ENCODE measurements at regions of chr1 and their contacts with region 1.

Region 1: DNA sequence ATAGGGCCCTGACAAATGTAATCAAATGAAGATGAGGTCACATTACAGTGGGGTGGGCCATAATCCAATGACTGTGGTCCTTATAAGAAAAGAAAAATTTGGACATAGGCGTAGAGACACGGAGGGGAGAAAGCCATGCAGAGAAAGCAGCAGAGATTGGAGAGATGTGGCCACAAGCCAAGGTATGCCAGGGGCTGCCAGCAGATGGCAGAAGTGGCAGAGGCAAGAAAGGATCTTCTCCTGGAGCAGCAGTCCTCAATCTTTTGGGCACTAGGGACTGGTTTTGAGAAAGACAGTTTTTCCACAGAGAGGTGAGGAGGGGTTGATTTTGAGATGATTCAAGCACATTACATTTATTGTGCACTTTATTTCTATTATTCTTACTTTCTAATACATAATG is 355.1 kb downstream of the NPHP4 start:
- DNase-seq: peak; percentile 18
- ATAC-seq: peak; percentile 60; the same call in 1 of the 2 replicates
- H3K4me3 ChIP-seq: no peak overlapping the region
- H3K27ac ChIP-seq: no peak overlapping the region
- H3K4me1 ChIP-seq: peaks cover 0 to 2% of the 10 kb centered on the region in 2 experiments; a peak in 1 of 4 replicates
- H3K27me3 ChIP-seq: peaks cover 39% of the 10 kb centered on the region
- CTCF ChIP-seq: peak; percentile 58 to 75 (median 68); a peak in 5 of 6 replicates
- POLR2A ChIP-seq: no peak
- RAD21 ChIP-seq: peak; percentile 65

Region 2: DNA sequence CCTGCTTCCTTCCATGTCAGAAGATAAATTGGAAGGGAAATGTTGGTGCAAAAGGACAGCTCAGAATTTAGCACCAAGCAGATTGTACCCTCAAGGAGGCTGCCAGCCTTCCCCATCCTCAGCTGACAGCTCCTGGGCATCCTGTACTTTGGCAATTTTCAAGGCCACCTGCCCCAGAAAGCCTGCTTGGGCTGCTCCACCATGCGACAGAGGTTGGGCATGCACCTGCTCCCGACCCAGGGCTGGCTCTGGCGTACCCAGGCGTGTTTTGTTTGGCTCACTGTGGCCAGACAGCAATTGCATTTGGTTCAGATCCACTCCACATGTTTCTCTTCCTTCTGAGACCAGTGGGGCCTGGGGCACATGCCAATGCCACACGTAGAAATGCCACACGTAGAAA is 192.8 kb before region 1 on chr1:
- CTCF ChIA-PET with region 1: no interaction called
- POLR2A ChIA-PET with region 1: no interaction called
- RAD21 ChIA-PET with region 1: no interaction called
- intact Hi-C with region 1: no loop called
- DNase-seq: no peak
- ATAC-seq: no peak
- H3K4me3 ChIP-seq: no peak overlapping the region
- H3K27ac ChIP-seq: no peak overlapping the region
- H3K4me1 ChIP-seq: no peaks in the 10 kb centered on the region
- H3K27me3 ChIP-seq: 0 out of 2 replicates have a peak, but pooled peaks cover 8% of the 10 kb centered on the region
- CTCF ChIP-seq: no peak
- POLR2A ChIP-seq: no peak
- RAD21 ChIP-seq: no peak

Region 3: GRCh38 chr1:5830771-5831599 is 193.8 kb after region 1 on chr1:
- CTCF ChIA-PET with region 1: no interaction called
- POLR2A ChIA-PET with region 1: no interaction called
- RAD21 ChIA-PET with region 1: no interaction called
- intact Hi-C with region 1: loop called (anchors 10 kb)
- DNase-seq: no peak
- ATAC-seq: peak; percentile 83
- H3K4me3 ChIP-seq: no peak overlapping the region
- H3K27ac ChIP-seq: no peak overlapping the region
- H3K4me1 ChIP-seq: no peaks in the 10 kb centered on the region
- H3K27me3 ChIP-seq: no peaks in the 10 kb centered on the region
- CTCF ChIP-seq: peak; percentile 33 to 67 (median 66); a peak in 4 of 6 replicates
- POLR2A ChIP-seq: no peak
- RAD21 ChIP-seq: peak; percentile 73

Region 4: GRCh38 chr1:5915587-5916571 is 278.7 kb after region 1 on chr1:
- CTCF ChIA-PET with region 1: no interaction called
- POLR2A ChIA-PET with region 1: no interaction called
- RAD21 ChIA-PET with region 1: no interaction called
- intact Hi-C with region 1: loop called (anchors 1 kb)
- DNase-seq: peak; percentile 6
- ATAC-seq: peak; percentile 87
- H3K4me3 ChIP-seq: no peak overlapping the region
- H3K27ac ChIP-seq: no peak overlapping the region
- H3K4me1 ChIP-seq: peaks cover 5 to 6% of the 10 kb centered on the region in 2 experiments; a peak in 3 of 4 replicates
- H3K27me3 ChIP-seq: no peaks in the 10 kb centered on the region
- CTCF ChIP-seq: peak; percentile 40 to 82 (median 68); a peak in 5 of 6 replicates
- POLR2A ChIP-seq: no peak
- RAD21 ChIP-seq: peak; percentile 57; the same call in 1 of the 2 replicates

Region 5: GRCh38 chr1:5975133-5975880 is 338.1 kb after region 1 on chr1:
- CTCF ChIA-PET with region 1: no interaction called
- POLR2A ChIA-PET with region 1: no interaction called
- RAD21 ChIA-PET with region 1: no interaction called
- intact Hi-C with region 1: loop called (anchors 1 kb)
- DNase-seq: no peak
- ATAC-seq: peak; percentile 84
- H3K4me3 ChIP-seq: no peak overlapping the region
- H3K27ac ChIP-seq: no peak overlapping the region
- H3K4me1 ChIP-seq: peaks cover 2 to 28% of the 10 kb centered on the region in 2 experiments; a peak in 3 of 4 replicates
- H3K27me3 ChIP-seq: no peaks in the 10 kb centered on the region
- CTCF ChIP-seq: peak; percentile 47 to 75 (median 72); a peak in 5 of 6 replicates
- POLR2A ChIP-seq: no peak
- RAD21 ChIP-seq: peak; percentile 73

Measured in HCT116 (cell line).